Activated naive CD4-positive, alpha-beta T cell treated with anti-CD3 and anti-CD28 coated beads for 36 hours (primary cell): ENCODE measurements at regions of chr4 and their contacts with region 1.

Region 1: DNA sequence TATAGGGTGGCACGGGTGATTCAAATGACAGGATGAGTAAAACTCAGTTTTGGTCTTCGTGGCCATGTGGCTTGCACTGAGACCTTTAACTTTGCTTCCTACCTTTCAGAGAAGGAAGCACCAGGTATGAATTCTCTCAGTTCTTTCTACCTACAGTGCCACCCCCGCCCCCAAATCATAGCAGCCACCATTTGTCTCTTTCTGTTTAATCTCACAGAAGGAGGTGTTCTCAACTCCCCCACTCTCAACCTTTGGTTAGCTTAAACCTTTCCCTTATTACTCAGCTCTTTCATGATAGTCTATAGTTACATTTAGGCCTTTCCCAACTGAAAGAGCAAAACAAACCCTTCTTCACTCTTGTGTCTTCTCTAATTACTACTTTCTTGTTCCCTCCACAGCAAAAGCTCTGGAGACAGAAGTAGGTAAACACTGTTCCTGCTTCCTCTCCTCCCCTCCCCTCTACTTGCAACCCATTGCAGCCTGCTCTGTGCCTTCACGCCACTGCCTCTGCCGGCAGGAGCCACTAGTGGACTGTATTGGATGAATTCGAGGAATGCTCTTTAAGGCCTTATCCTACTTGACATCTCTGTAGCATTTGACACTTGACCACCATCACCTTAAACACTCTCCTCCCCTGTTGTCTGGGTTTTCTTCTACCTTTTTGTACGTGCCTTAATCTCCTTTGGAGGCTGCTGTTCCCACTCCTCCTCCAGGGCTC is 123.7 kb downstream of the AFF1 start:
- DNase-seq: peak; percentile 68
- H3K4me3 Mint-ChIP-seq: peak overlapping the region; percentile 2
- H3K27ac Mint-ChIP-seq: peak overlapping the region; percentile 24
- H3K4me1 Mint-ChIP-seq: peaks cover 51% of the 10 kb centered on the region
- H3K27me3 Mint-ChIP-seq: no peaks in the 10 kb centered on the region

Region 2: DNA sequence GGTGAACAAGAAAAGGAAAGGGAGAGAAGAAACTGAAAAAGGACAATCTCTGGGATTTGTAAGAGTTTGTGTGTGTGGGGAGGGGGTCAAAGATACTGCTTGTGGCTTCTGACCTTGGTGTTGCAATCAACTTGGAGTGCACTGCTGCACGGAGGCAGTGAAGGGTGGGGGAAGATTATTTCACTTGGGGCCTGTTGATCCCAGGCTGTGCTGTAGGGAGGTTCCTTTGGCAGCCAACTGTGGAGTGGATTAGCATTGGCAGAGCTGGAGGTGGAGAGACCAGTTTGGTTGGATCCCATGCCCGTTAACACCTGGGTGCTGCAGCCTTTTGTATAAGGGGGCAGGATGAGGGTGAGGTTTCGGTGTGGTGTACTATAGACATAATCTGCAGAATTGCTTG is 85.5 kb before region 1 on chr4:
- CTCF ChIA-PET with region 1: no interaction called
- intact Hi-C with region 1: no loop called
- DNase-seq: no peak
- H3K4me3 Mint-ChIP-seq: no peak overlapping the region
- H3K27ac Mint-ChIP-seq: no peak overlapping the region
- H3K4me1 Mint-ChIP-seq: peaks cover 46% of the 10 kb centered on the region
- H3K27me3 Mint-ChIP-seq: no peaks in the 10 kb centered on the region

Region 3: GRCh38 chr4:87017580-87018342 is 40.8 kb before region 1 on chr4:
- CTCF ChIA-PET with region 1: interaction called, 4 read pairs
- intact Hi-C with region 1: loop called (anchors 2 kb)
- DNase-seq: peak; percentile 37
- H3K4me3 Mint-ChIP-seq: no peak overlapping the region
- H3K27ac Mint-ChIP-seq: peak overlapping the region; percentile 88
- H3K4me1 Mint-ChIP-seq: peaks cover 82% of the 10 kb centered on the region
- H3K27me3 Mint-ChIP-seq: no peaks in the 10 kb centered on the region

Region 4: GRCh38 chr4:87073199-87074120 is 14.9 kb after region 1 on chr4:
- CTCF ChIA-PET with region 1: no interaction called
- intact Hi-C with region 1: loop called (anchors 1 kb)
- DNase-seq: peak; percentile 77
- H3K4me3 Mint-ChIP-seq: peak overlapping the region; percentile 55
- H3K27ac Mint-ChIP-seq: peak overlapping the region; percentile 67
- H3K4me1 Mint-ChIP-seq: peaks cover 44% of the 10 kb centered on the region
- H3K27me3 Mint-ChIP-seq: no peaks in the 10 kb centered on the region